Activated T-helper 1 cell treated with anti-CD3 and anti-CD28 coated beads, Interleukin-12 subunit alpha, Interleukin-12 subunit beta, Interleukin-2, Interleukin-4 antibody, amounts not matched to agents 30 ng/mL and 10 ng/mL and 1 ng/mL, durations not matched to agents 14 hours and 24 hours and 36 hours (primary cell): ENCODE measurements at regions of chr5 and their contacts with region 1.

Region 1: DNA sequence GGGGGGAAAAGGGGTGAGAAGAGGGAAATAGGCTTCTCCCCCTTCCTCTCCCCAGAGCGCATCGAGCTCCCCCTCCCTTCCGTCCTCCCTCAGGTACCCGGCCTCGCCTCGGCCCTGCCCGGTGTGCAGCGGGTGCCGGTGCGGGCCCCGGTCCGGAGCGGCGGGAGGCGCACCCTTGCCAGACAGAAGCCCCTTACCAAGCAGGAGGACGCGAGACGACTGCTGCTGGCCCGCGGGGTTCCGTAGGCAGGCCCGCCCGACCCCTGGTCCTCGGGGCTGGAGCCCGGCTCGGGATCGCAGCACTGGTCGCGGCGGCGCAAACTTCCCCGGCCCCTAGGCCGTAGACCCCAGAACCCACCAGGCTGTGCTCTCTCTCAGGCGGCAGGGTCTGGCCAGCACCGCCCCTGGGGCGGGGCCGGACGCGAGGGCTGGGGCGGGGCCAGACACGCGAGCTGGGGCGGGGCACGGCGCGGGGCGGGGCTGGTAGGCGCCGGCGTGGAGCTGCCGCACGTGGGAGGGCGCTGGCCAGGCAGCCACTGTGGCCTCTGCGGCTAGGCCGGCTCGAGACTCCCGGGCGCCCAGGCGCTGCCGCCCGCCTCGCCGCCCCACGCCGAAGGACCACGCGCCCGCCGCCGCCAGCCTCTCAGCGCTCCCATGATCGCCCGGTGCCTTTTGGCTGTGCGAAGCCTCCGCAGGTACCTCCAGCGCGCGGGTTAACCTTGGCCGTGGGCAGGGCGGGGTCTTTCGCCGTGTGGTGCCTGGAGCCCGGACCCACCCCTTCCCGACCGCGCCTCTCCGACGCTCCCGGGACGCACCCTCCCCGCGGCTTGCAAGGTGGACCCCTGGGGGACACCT is at the starts of genes NLN and SGTB:
- DNase-seq: peak; percentile 81
- H3K4me3 Mint-ChIP-seq: peak within 1 kb of the TSS; percentile 95
- H3K27ac Mint-ChIP-seq: peak within 1 kb of the TSS; percentile 92
- H3K4me1 Mint-ChIP-seq: peaks cover 34% of the 10 kb centered on the region
- H3K27me3 Mint-ChIP-seq: no peaks in the 10 kb centered on the region
- total RNA-seq, gene NLN: 24.4 TPM in 2 replicates
- total RNA-seq, gene SGTB: 11.3 and 12.2 TPM in 2 replicates

Region 2: DNA sequence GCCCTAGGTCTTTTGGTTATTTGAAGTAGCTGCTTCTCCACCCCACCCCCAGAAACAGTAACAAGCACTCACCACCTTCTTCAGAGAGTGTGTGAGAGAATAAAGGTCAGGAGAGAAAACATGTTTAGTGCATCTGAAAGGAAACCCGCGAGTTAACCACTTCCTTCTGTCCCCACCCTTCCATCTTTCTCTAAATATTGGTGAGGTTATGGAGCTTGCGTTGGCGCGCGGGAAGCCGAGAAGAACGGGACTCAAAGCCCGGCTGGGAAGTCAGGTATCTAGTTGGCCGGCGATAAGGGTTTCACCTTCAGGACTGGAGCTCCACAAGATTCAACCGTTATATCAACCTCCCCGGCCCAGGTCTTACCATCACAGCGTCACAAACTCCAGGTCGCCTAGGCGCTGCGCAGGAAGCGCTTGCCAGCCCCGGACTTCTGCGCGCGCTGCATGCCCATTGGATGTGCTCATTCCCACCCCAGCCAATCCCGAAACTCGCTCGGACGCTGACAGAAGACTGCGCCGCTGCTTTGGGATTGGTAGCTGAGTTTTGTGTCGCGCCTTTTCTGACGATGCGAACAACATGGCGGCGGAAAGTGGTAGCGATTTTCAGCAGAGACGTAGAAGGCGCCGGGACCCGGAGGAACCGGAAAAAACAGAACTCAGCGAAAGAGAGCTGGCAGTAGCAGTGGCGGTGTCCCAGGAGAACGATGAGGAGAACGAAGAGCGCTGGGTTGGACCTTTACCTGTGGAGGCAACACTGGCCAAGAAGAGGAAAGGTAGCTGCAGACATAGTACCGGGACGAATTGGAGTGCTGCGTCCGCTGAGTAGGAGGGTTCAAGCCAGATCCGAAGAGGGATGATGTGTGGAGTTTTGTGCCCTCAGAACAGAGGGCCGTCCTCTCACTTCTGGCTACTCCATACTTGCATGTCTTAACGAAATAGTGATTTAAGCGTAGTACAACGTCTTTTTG is 158.9 kb before region 1 on chr5 and contains the starts of genes CENPK and PPWD1:
- intact Hi-C with region 1: loop called (anchors 1 kb)
- DNase-seq: peak; percentile 94
- H3K4me3 Mint-ChIP-seq: peak within 1 kb of the TSS; percentile 95
- H3K27ac Mint-ChIP-seq: peak within 1 kb of the TSS; percentile 99
- H3K4me1 Mint-ChIP-seq: peaks cover 53% of the 10 kb centered on the region
- H3K27me3 Mint-ChIP-seq: no peaks in the 10 kb centered on the region
- total RNA-seq, gene CENPK: 81.0 and 85.1 TPM in 2 replicates
- total RNA-seq, gene PPWD1: 63.6 and 65.4 TPM in 2 replicates

Region 3: DNA sequence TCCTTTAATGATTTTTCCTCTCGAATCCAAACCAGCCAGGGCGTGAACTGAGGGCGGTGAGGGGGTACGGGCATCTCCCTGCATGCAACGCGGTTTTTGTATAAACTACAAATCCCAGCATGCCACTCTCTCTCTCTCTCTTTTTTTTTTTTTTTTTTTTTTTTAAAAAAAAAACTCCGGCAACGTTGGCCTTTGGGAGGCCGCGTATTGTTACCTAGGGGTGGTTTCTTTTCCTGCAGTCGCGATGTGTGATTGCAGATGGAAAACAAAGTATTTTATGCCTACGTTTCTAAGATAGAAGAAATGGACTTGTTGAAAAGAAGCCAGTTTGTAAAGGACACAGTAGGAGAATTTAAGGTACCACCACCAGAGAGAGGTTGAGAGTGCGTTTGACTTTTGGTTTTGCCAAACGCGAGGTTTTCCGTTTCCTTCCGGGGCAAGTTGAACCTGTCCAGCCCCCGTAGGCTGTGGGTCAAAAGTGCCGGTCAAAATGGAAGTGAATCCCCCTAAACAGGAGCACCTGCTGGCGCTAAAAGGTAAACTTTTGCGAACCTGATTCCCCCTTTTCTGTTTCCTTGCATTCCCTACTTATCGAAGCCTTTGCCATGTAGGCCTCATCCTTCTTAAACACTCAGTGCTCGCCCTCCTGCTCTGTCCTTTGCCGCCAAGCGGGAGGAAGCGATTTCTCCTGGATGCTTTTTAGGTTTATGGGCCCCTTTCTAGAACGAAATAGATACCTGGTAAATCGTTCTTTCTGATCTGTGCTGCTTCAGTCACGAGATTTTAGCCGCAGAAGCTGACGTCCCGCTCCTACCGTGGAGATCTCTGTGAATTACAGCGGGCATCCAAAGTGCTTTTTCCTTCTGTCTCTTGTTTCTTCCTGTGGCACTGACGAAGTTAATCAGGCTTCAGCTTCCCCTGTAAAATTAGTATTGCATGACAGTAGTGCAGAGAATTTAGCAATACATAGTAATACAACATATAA is 97.1 kb before region 1 on chr5 and contains the starts of genes SHLD3 and TRAPPC13:
- intact Hi-C with region 1: loop called (anchors 1 kb)
- DNase-seq: peak; percentile 81
- H3K4me3 Mint-ChIP-seq: peak within 1 kb of the TSS; percentile 94
- H3K27ac Mint-ChIP-seq: peak within 1 kb of the TSS; percentile 96
- H3K4me1 Mint-ChIP-seq: peaks cover 33% of the 10 kb centered on the region
- H3K27me3 Mint-ChIP-seq: no peaks in the 10 kb centered on the region
- total RNA-seq, gene SHLD3: 6.5 and 7.6 TPM in 2 replicates
- total RNA-seq, gene TRAPPC13: 21.7 and 23.7 TPM in 2 replicates

Region 4: DNA sequence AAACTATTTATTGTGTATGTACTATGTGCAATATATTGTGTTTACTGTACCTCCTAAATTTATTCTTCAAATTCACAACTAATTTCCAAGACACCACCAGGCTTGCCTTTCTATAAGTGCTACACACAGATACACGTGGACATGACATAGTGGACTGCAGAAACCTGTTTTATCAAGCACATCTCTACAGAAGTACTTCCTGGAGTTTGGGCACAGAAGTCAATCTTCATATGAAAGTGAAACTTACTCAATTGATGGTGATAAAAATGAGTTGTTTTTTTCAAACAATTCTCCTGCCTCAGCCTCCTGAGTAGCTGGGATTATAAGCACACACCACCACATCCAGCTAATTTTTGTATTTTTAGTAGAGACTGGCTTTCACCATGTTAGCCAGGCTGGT is 57.7 kb after region 1 on chr5:
- intact Hi-C with region 1: loop called (anchors 5 kb)
- DNase-seq: no peak
- H3K4me3 Mint-ChIP-seq: no peak overlapping the region
- H3K27ac Mint-ChIP-seq: no peak overlapping the region
- H3K4me1 Mint-ChIP-seq: peaks cover 38% of the 10 kb centered on the region
- H3K27me3 Mint-ChIP-seq: no peaks in the 10 kb centered on the region

Region 5: DNA sequence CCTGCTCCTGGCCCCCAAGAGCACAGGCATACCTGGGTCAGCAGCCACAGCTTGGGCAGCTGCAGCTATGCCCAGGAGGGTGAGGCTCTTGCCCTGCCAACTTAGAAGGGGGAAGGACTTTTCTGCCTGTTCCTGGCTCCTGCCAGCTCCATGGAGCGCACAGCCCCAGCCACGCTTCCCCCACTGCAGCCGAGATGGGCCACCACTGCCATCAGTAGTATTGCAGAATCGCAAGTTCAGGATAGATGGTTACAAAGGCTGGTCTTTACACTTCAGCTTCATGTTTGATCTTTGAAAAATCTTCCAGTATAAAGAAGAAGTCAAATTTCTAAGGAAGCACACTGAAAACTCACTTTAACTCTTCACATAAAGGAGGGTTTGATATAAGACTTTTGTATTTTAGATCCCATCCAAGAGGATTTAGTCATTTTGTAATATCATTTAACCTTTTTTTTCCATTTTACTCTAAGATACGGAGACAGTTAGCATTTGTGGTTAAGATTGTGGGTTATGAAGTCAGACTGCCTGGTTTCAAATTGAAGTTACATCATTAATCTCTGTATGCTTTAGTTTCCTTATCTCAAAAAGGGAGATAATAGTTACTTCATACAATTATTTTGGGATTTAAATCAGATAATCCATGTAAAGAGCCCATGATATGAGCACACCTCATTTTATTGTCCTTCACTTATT is 81.9 kb after region 1 on chr5:
- intact Hi-C with region 1: loop called (anchors 2 kb)
- DNase-seq: no peak
- H3K4me3 Mint-ChIP-seq: peak overlapping the region; percentile 55
- H3K27ac Mint-ChIP-seq: peak overlapping the region; percentile 31
- H3K4me1 Mint-ChIP-seq: peaks cover 39% of the 10 kb centered on the region
- H3K27me3 Mint-ChIP-seq: no peaks in the 10 kb centered on the region

Region 6: DNA sequence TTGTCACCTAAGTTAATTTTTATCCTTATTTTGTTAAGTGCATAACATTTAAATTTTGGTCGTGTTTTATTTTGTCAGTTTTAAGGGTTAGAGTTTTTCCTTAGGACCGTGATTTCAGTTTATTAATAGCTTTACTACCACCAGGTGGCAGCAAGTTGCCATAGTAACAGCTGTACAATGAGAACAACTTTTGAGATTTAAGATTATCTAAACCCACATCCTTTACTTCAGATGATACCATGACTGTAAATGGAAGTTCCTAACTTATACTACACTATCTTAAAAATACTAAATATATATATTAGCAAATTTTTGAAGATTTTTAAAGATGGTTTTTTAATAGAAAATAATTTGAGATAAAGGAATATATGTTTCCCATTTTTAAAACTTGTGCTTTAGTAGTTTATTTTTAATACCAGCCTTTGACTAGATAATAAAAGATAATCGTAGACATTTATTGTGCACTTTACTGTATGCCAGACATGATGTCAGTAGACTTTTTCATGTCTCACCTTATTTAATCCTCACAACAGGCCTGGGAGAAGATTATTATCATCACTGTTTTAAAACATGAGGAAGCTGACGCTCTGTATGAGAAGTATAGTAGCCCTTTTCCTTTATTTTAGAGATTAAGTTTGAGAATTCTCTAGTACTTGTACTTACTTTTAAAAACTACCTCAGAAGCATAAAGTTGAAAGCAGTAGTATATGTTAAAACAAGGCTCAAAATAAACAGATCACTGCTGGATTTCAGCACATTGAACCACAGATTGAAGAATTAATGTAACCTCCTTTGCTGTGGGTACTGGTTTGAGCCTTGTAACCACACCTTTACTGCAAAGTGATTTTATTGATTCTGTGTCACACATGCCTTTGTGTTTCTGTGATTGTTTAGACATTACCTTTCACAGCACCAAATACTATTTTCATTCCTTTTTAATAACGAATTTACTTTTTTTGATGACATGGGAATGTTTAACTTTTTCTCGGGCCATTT is 449.7 kb after region 1 on chr5:
- intact Hi-C with region 1: loop called (anchors 5 kb)
- DNase-seq: peak; percentile 30
- H3K4me3 Mint-ChIP-seq: no peak overlapping the region
- H3K27ac Mint-ChIP-seq: peak overlapping the region; percentile 40
- H3K4me1 Mint-ChIP-seq: peaks cover 29% of the 10 kb centered on the region
- H3K27me3 Mint-ChIP-seq: no peaks in the 10 kb centered on the region